ENCODE measurements at regions of chr18 and their contacts with region 1.

Region 1: DNA sequence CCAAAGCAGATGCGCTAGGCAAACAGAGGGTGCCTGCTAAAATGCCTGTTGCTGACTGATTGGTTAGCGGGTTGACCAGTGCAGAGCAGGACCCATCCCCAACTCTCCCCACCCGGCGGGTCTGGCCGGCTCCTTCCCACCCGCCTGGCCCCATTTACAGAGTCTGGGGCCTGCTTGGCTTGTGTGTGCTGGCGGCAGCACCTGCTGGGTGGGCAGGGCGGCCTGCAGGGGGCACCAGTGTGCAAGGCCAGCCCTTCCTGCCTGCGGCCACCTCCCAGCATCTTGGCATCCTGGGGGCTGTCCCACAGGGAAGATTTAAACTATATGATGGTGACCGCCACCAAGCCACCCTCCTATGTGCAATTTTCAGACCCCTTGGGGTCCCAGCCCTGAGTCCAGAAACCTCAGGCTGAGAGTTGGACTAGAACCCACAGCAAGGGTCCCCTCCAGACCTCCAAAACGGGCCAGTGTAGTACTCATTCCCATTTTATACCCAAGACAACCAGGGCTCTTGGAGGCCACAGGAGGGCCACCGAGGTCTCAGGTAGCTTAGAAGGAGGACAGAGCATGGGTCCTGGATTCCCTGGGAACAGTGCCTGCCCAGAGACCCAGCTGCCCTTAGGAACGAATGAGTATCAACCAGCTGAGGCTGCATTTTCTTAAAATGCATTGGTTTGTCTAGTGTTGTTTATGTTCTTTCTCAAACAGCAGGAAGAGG is 173.6 kb downstream of the SMAD7 start:
- DNase-seq: peak; percentile 59
- H3K4me3 ChIP-seq: no peak overlapping the region
- H3K27ac ChIP-seq: no peak overlapping the region
- H3K4me1 ChIP-seq: peaks cover 6% of the 10 kb centered on the region
- H3K27me3 ChIP-seq: no peaks in the 10 kb centered on the region
- CTCF ChIP-seq: peak; percentile 90

Region 2: GRCh38 chr18:48913201-48913600 is 136.0 kb after region 1 on chr18:
- intact Hi-C with region 1: loop called (anchors 5 kb)
- DNase-seq: peak; percentile 41
- H3K4me3 ChIP-seq: no peak overlapping the region
- H3K27ac ChIP-seq: no peak overlapping the region
- H3K4me1 ChIP-seq: no peaks in the 10 kb centered on the region
- H3K27me3 ChIP-seq: no peaks in the 10 kb centered on the region
- CTCF ChIP-seq: peak; percentile 29

Region 3: GRCh38 chr18:48951448-48952286 is 174.5 kb after region 1 on chr18:
- intact Hi-C with region 1: loop called (anchors 10 kb)
- DNase-seq: peak; percentile 83
- H3K4me3 ChIP-seq: peak overlapping the region; percentile 65
- H3K27ac ChIP-seq: peak overlapping the region; percentile 99
- H3K4me1 ChIP-seq: peaks cover 8% of the 10 kb centered on the region
- H3K27me3 ChIP-seq: no peaks in the 10 kb centered on the region
- CTCF ChIP-seq: no peak

Region 4: GRCh38 chr18:49041435-49042245 is 264.5 kb after region 1 on chr18:
- intact Hi-C with region 1: loop called (anchors 5 kb)
- DNase-seq: peak; percentile 65
- H3K4me3 ChIP-seq: no peak overlapping the region
- H3K27ac ChIP-seq: no peak overlapping the region
- H3K4me1 ChIP-seq: no peaks in the 10 kb centered on the region
- H3K27me3 ChIP-seq: no peaks in the 10 kb centered on the region
- CTCF ChIP-seq: peak; percentile 52

Region 5: DNA sequence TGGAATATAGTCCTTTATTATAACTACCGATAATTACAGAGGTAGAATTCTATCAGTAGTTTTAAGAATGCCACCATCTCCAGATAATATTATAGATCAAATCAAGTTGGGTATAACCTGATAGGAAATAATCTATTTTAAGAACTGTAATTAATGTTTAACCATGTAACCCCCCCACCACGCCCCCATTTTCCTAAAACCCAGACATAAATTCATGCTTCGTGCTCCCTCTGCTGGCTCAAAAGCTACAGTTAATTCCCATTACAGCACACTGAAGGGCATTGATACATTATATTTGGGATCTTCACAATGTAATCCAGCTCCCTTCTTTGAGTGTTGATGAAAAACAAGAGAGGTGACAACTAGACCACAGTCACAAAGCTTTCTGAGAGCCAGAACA is 401.6 kb after region 1 on chr18:
- intact Hi-C with region 1: loop called (anchors 10 kb)
- DNase-seq: peak; percentile 29
- H3K4me3 ChIP-seq: no peak overlapping the region
- H3K27ac ChIP-seq: no peak overlapping the region
- H3K4me1 ChIP-seq: no peaks in the 10 kb centered on the region
- H3K27me3 ChIP-seq: no peaks in the 10 kb centered on the region
- CTCF ChIP-seq: peak; percentile 24

Measured in colonic mucosa (tissue), 4 donors.